BJ (cell line): ENCODE measurements at regions of chr17 and their contacts with region 1.

Region 1: GRCh38 chr17:7435221-7435675 is at the start of gene TMEM102:
- DNase-seq: peak; percentile 79
- H3K4me3 ChIP-seq: peak within 1 kb of the TSS; percentile 44
- H3K27me3 ChIP-seq: peaks cover 13% of the 10 kb centered on the region
- CTCF ChIP-seq: no peak
- polyA plus RNA-seq, gene TMEM102: 1.8 and 3.0 TPM in 2 replicates

Region 2: DNA sequence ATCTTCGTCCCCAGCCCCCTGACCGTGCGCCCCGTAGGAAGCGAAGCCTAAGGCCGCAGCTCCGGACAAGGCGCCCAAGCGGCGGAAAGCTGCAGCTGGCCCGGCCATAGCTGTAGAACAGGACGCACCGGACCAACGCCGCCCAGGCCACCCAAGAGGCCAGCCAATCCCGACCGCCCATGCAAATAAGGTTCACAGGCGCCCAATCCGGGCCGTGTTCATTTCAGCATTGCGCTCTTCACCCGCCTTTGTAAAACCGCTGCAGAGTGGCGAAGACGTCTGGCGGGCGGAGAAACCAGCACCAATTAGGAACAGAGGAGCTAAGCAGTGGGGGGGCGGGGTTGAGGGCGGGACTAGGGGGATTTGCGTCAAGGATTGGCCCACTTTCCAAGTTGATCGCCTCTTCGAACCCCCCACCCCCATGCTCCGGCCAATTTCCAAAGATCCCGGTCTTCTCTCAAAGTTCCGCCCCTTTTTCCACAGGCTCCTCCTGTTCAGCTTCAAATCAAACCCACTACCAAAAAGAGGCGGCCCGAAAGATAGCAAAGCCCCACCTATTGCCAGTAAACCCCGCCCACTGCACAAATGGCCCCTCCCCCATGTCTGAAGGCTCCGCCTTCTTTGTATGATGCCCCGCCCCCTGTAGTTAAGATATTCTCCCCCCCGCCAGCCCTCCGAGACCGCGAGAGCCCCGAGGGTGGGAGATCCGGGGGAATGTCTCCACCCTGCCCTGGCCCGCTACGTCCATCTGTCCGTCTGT is 31.1 kb before region 1 on chr17 and contains the start of gene TMEM256:
- CTCF ChIA-PET with region 1: interaction called, 21 read pairs
- POLR2A ChIA-PET with region 1: interaction called, 11 read pairs
- DNase-seq: peak; percentile 98
- H3K4me3 ChIP-seq: peak within 1 kb of the TSS; percentile 59
- H3K27me3 ChIP-seq: no peaks in the 10 kb centered on the region
- CTCF ChIP-seq: no peak
- polyA plus RNA-seq, gene TMEM256: 65.4 and 101 TPM in 2 replicates

Region 3: DNA sequence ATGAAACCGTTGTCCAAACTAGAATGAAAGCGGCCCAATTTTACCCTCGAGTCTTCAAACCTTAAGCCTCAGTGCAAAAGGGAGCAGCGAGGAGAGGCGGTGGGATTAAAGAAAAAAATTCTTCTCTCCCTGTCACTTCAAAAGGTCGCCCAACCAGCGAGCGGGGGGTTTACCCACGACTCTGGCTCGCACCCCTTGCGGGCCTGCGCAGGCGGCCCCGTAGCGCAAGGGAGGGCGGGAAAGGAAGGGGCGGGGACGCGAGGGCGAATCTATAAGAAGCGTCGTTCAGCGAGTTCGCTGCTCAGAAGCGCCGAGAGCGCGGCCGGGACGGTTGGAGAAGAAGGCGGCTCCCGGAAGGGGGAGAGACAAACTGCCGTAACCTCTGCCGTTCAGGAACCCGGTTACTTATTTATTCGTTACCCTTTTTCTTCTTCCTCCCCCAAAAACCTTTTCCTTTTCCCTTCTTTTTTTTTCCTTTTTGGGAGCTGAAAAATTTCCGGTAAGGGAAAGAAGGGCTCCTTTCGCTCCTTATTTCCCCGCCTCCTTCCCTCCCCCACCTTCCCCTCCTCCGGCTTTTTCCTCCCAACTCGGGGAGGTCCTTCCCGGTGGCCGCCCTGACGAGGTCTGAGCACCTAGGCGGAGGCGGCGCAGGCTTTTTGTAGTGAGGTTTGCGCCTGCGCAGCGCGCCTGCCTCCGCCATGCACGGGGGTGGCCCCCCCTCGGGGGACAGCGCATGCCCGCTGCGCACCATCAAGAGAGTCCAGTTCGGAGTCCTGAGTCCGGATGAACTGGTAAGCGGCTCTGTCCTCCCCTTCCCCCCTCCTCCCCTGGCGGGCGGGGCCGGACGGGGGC is 49.0 kb after region 1 on chr17 and contains the start of gene POLR2A:
- CTCF ChIA-PET with region 1: interaction called, 17 read pairs
- POLR2A ChIA-PET with region 1: no interaction called
- DNase-seq: peak; percentile 92
- H3K4me3 ChIP-seq: peak within 1 kb of the TSS; percentile 67
- H3K27me3 ChIP-seq: no peaks in the 10 kb centered on the region
- CTCF ChIP-seq: no peak
- polyA plus RNA-seq, gene POLR2A: 21.5 and 27.7 TPM in 2 replicates

Region 4: GRCh38 chr17:7548585-7549400 is 113.5 kb after region 1 on chr17 and contains the start of gene TNFSF12:
- CTCF ChIA-PET with region 1: no interaction called
- POLR2A ChIA-PET with region 1: no interaction called
- DNase-seq: no peak
- H3K4me3 ChIP-seq: peak within 1 kb of the TSS; percentile 68
- H3K27me3 ChIP-seq: no peaks in the 10 kb centered on the region
- CTCF ChIP-seq: peak; percentile 25
- polyA plus RNA-seq, gene TNFSF12: 29.2 and 49.5 TPM in 2 replicates